ENCODE measurements at regions of chr2 and their contacts with region 1.

Region 1: GRCh38 chr2:240369801-240370585 is 65.5 kb upstream of the GPC1 start:
- DNase-seq: peak; percentile 84
- H3K4me3 Mint-ChIP-seq: no peak overlapping the region
- H3K27ac Mint-ChIP-seq: peak overlapping the region; percentile 35
- H3K4me1 Mint-ChIP-seq: peaks cover 17% of the 10 kb centered on the region
- H3K27me3 Mint-ChIP-seq: no peaks in the 10 kb centered on the region
- CTCF ChIP-seq: no peak

Region 2: GRCh38 chr2:240250985-240251847 is 118.8 kb before region 1 on chr2:
- CTCF ChIA-PET with region 1: interaction called, 3 read pairs
- POLR2A ChIA-PET with region 1: interaction called, 4 read pairs
- intact Hi-C with region 1: loop called (anchors 1 kb)
- DNase-seq: peak; percentile 92
- H3K4me3 Mint-ChIP-seq: peak overlapping the region; percentile 29
- H3K27ac Mint-ChIP-seq: peak overlapping the region; percentile 31
- H3K4me1 Mint-ChIP-seq: peaks cover 12% of the 10 kb centered on the region
- H3K27me3 Mint-ChIP-seq: no peaks in the 10 kb centered on the region
- CTCF ChIP-seq: no peak

Measured in MCF 10A (cell line).